ENCODE measurements at regions of chr2 and their contacts with region 1.

Region 1: DNA sequence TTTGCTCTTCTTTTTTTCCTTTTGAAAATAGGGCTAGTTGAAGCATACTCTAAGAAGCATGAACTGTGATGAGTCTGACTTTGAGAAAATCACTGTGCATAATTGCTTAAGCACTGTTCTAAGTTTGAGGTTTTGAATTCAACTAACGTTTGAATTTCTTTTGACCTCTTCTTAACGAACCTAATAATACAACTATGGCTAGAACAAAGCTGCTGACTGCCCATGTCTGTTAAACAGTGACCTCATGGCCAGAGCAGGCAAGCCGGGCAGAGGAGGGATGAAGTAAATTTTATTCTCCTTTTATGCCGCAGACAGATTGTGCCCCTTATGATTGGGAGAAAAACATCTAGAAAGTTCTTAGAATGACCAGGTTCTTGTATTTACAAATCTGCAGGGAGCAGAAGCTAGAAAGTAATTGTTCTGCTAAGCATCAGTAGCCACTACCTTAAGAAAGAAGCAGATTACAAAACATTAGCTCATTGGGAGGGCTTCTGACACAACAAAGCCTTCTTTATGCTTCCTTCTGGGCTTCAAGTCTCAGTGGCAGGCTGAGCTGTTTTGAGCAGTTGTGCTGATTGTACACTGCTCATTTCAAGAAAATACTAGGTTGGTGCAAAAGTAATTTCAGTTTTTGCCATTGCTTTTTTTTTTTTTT is 97.8 kb upstream of the RASGRP3 start:
- DNase-seq: no peak
- H3K4me3 ChIP-seq: no peak overlapping the region
- H3K27ac ChIP-seq: no peak overlapping the region
- H3K4me1 ChIP-seq: no peaks in the 10 kb centered on the region
- H3K27me3 ChIP-seq: no peaks in the 10 kb centered on the region
- CTCF ChIP-seq: no peak

Region 2: DNA sequence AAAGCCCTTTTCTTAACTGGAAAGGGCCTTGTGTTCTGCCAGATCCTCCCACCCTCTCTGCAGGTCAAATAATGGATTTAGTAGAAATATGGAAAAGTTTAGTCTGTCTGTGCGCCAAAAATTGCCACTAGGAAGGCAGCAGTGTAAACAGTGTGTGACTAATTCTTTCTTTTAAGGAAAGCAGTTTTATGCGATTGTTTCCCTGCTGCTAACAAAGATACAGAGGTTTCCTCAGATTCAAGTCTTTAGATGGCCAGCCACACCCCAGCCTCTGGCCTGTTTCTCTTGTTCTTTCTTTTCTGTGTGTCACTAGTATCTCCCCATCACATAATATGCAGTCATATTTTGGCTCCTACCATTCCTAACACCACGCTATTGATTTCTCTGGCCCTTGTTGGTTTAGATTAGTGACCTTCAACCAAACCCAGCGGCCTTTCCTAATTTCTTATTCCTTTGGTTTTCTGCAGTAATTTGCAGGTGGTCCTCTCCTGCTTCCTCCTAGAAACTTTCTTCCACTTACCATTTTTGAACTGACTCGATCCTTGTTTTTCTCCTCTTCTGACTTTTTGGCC is 274.5 kb before region 1 on chr2:
- CTCF ChIA-PET with region 1: interaction called, 31 read pairs
- POLR2A ChIA-PET with region 1: no interaction called
- intact Hi-C with region 1: no loop called
- DNase-seq: peak in 1 of 2 experiments; percentile 7
- H3K4me3 ChIP-seq: no peak overlapping the region
- H3K27ac ChIP-seq: no peak overlapping the region
- H3K4me1 ChIP-seq: 0 out of 2 replicates have a peak, but pooled peaks cover 7% of the 10 kb centered on the region
- H3K27me3 ChIP-seq: no peaks in the 10 kb centered on the region
- CTCF ChIP-seq: no peak

Measured in PC-9 (cell line).